ENCODE measurements at regions of chr1 and their contacts with region 1.

Region 1: DNA sequence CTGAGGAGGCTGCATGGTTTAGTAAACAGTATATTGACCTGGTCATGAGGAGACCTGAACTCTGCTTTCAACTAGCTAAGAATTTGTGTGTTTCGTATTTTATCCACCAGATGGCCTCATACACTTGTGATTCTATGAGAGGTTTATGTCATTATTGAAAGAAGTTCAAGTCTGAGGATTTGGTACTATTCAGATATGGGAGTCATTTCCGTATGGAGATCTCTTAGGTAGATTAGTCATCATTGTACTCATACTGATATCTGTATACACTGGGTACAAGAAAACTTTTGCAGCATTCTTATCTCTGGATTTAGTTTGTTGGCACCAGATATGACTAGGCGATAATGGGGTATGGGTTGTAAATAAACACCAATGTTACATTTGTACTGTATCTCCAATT is 26.6 kb downstream of the ATF6 start:
- DNase-seq: peak; percentile 16 to 48 (median 34)
- H3K4me3 ChIP-seq: no peak overlapping the region
- H3K4me3 Mint-ChIP-seq: no peak overlapping the region
- H3K27ac ChIP-seq: no peak overlapping the region
- H3K27ac Mint-ChIP-seq: peak overlapping the region in 1 of 7 donors; percentile 17
- H3K4me1 ChIP-seq: no peaks in the 10 kb centered on the region
- H3K4me1 Mint-ChIP-seq: no peaks in the 10 kb centered on the region
- H3K27me3 ChIP-seq: no peaks in the 10 kb centered on the region
- H3K27me3 Mint-ChIP-seq: no peaks in the 10 kb centered on the region
- CTCF ChIP-seq: peak; percentile 73

Region 2: DNA sequence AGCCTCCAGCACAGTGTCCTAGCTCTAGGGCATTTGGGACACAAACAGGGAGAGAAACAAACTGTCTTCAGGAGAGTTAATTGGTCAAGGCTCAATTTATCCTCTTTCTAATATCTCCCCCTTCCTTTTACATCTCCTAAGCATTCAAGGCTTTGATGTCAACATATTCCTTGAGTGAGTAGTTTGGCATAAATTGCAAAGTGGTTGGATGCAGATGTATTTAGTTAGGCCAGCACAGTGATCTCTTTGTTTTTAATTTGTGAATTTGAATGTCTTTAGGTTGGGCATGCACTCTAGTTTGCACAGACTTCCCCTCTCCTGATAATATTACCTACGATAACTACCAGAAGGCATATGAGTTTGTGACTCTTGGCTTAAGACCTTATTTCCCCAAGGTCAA is 243.4 kb after region 1 on chr1:
- intact Hi-C with region 1: loop called (anchors 2 kb)
- DNase-seq: no peak
- H3K4me3 ChIP-seq: no peak overlapping the region
- H3K4me3 Mint-ChIP-seq: no peak overlapping the region
- H3K27ac ChIP-seq: no peak overlapping the region
- H3K27ac Mint-ChIP-seq: no peak overlapping the region
- H3K4me1 ChIP-seq: no peaks in the 10 kb centered on the region
- H3K4me1 Mint-ChIP-seq: peaks cover 3% of the 10 kb centered on the region
- H3K27me3 ChIP-seq: peaks cover 2 to 4% of the 10 kb centered on the region in 2 donors
- H3K27me3 Mint-ChIP-seq: peaks cover 2 to 7% (median 3%) of the 10 kb centered on the region in 3 donors
- CTCF ChIP-seq: no peak